Dorsolateral prefrontal cortex (tissue), 120 donors: ENCODE measurements at regions of chr3 and their contacts with region 1.

Region 1: DNA sequence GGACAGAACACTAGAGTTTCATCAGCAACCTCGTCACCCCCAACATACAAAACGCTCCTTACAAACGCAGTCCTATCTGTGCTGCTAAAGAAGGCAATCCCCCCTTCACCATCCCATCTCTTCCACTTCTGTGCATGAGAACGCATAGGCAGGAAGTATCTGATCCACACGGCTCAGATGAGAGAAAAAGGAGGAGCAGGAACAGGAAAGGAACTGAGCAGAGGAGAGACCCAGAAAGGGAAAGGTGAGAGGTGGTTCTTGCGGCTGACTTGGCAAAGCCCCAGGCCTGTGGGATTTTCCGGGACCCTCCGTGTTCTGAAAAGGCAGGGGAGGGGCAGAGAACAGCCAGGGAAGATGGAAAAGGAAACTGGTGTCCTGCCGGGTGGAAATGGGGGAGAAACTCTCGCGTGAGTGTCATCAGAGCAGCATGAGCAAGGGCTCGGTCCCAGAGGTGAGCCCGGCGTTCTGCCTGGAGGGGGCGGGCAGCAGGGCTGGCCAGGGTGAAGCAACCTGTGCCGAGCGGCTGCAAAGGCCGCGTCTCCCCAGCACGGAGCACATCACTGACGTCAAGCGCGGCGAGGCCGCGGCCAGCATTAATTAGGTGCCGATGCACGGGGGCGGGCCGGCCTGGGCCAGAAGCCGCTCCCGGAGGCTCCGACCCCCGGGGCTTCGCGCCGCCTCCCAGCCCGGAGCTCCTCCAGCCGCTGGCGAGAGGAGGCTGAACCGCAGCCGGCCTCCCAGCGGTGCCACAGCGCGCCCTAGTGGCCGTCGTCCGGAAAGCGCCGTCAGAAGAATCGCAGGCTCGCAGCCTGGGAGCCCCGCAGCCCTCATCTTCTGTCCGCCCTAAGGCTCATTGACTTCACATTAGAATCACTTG is 35.8 kb downstream of the CPN2 start:
- DNase-seq: peak; percentile 70 to 92 (median 80)
- H3K4me3 ChIP-seq: peak overlapping the region; percentile 36 to 81 (median 66)
- H3K27ac ChIP-seq: peak overlapping the region in 27 of 59 donors; percentile 2 to 81 (median 42)
- H3K27me3 ChIP-seq: peaks cover 0 to 19% (median 0%) of the 10 kb centered on the region in 45 donors
- CTCF ChIP-seq: peak in 55 of 56 donors; percentile 86 to 99 (median 97)

Region 2: DNA sequence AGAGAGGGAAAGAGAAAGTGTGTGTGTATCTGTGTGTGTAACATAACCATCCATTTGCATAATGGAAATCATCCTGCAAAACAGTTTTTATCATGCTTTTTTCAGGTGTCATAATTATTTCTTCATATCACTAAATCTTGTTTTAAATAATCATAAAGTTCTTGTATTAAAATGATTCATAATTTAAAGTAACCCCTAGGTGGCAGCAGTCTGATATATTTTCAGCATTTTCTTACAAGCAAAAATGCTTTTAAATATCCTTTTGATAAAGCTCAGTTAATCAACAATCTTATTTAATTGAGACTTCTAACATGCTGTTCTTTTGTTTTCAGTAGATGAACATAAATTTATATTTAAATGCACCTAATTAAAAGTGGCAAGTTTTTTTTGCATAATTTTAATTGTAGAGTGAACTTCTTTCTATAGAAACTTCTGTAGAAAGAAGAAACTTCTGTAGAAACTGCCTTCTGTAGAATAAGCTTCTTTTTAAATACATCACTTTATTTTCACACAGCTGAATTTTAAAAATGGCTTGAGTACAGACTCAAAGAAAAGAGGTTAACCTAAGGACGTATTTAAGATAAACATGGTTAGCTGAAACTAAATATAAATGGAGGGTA is 649.8 kb before region 1 on chr3:
- intact Hi-C with region 1: loop called (anchors 10 kb)
- DNase-seq: no peak
- H3K4me3 ChIP-seq: no peak overlapping the region
- H3K27ac ChIP-seq: no peak overlapping the region
- H3K27me3 ChIP-seq: no peaks in the 10 kb centered on the region
- CTCF ChIP-seq: peak; percentile 41 to 74 (median 59)

Region 3: DNA sequence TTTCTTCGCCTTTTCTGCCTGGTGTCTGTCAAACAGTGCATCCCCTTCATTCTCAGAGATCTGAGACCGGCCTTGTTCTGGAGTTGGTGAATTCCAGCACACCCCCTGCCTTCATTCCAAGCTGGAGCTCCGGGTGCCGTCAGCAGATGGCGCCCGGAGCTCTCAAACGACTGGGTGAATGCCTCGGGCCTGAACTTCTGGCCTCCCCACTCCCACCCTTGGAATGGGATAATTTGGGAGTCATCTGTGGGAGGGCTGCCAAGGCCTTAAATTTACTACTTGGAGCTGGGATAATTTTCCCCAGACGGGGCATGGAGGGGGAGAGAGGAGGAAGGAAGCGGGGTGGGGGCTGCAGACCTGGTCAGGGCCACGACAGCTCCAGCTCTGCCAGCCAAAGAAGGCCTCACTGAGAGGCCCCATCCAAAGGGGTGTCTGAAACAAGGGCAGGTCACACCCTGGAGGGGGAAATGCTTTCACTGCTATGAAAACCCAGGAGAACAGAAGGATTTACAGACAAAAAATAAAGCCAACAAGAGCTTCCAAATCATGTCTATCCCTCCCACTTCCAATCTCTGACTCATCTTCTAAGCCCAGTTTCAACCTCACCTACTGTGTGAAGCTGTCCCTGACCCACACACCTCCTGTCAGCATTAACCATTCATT is 534.4 kb before region 1 on chr3:
- intact Hi-C with region 1: loop called (anchors 2 kb)
- DNase-seq: peak; percentile 9 to 63 (median 52)
- H3K4me3 ChIP-seq: peak overlapping the region in 1 of 59 donors; percentile 15
- H3K27ac ChIP-seq: no peak overlapping the region
- H3K27me3 ChIP-seq: peaks cover 0 to 12% (median 0%) of the 10 kb centered on the region in 45 donors
- CTCF ChIP-seq: peak; percentile 29 to 87 (median 72)

Region 4: GRCh38 chr3:193788189-193788991 is 526.9 kb before region 1 on chr3:
- intact Hi-C with region 1: loop called (anchors 2 kb)
- DNase-seq: peak in 9 of 10 donors; percentile 7 to 68 (median 51)
- H3K4me3 ChIP-seq: no peak overlapping the region
- H3K27ac ChIP-seq: peak overlapping the region in 3 of 59 donors; percentile 8 to 31 (median 21)
- H3K27me3 ChIP-seq: peaks cover 0 to 11% (median 0%) of the 10 kb centered on the region in 45 donors
- CTCF ChIP-seq: peak; percentile 20 to 88 (median 75)

Region 5: GRCh38 chr3:194134757-194135528 is 180.4 kb before region 1 on chr3:
- intact Hi-C with region 1: loop called (anchors 2 to 5 kb)
- DNase-seq: peak; percentile 19 to 80 (median 74)
- H3K4me3 ChIP-seq: peak overlapping the region; percentile 49 to 77 (median 68)
- H3K27ac ChIP-seq: peak overlapping the region in 57 of 59 donors; percentile 23 to 94 (median 86)
- H3K27me3 ChIP-seq: peaks cover 0 to 3% (median 0%) of the 10 kb centered on the region in 45 donors
- CTCF ChIP-seq: peak in 6 of 56 donors; percentile 4 to 30 (median 8)

Region 6: DNA sequence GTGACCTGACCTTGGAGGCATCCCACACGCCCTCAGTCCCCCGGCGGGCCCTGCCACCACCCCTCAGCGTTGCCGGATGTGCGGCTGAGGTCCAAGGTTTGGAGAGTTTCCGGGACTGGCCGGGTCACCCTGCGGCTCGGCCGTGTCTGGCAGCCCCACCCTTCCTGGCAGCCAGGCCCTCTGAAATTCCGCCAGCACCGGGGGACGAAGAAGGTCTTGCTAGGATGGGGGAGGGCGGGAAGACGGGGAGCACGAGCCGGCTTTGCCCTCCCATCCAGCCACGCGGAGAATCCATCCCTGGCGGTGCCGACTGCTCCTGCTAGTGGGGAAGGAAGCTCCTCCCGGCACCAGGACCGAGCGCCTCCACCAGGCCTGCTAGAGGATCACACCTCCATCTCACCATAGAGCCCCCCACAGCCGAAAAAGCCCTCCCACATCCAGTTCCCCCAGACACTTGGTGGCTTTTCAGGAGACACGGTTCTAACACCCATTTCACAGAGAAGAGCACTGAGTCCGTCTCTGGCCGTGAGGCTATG is 45.6 kb before region 1 on chr3:
- intact Hi-C with region 1: loop called in 1 of 2 experiments (anchors 5 kb)
- DNase-seq: peak in 2 of 10 donors; percentile 56 to 60
- H3K4me3 ChIP-seq: no peak overlapping the region
- H3K27ac ChIP-seq: peak overlapping the region in 14 of 59 donors; percentile 10 to 97 (median 94)
- H3K27me3 ChIP-seq: no peaks in the 10 kb centered on the region
- CTCF ChIP-seq: peak in 25 of 56 donors; percentile 9 to 39 (median 22)

Region 7: DNA sequence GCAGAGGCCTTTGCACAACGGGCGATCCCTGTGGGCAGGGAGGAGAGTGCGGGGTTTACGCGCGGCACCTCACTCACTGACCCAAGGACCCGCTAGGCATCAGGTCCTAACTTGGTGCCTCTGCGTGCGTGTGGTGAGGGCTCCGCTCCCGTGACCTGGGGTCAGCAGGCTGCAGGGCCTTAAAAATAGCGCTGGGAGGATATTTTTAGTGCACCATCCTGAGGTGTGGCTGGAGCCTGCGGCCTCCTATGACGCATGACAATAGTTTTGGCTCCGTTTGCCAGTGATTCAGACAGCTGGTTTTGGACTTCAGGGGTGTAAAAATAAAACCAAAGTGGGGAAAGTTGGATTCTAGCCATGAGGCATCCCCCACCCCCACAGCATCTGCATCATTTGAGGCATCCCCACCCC is 509.4 kb after region 1 on chr3:
- intact Hi-C with region 1: no loop called
- DNase-seq: peak in 2 of 10 donors; percentile 11 to 50
- H3K4me3 ChIP-seq: no peak overlapping the region
- H3K27ac ChIP-seq: no peak overlapping the region
- H3K27me3 ChIP-seq: peaks cover 0 to 3% (median 0%) of the 10 kb centered on the region in 45 donors
- CTCF ChIP-seq: no peak